T-cell (primary cell): ENCODE measurements at regions of chr3 and their contacts with region 1.

Region 1: DNA sequence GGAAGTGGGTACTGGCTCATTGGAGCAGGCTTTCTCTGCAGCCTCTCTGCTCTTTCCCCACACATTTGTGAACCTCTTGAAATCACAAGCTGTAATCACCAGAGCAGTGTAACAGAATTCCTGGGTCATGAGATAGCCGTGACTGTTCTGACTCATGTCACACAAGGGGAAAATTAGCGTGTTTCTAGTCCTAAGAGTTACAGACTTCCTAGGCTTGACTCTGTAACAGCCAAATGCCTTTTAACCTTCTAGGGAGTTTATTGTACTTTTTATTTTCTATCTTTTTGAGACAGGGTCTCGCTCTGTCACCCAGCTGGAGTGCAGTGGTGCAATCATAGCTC is 54.7 kb upstream of the TRAK1 start:
- DNase-seq: no peak
- ATAC-seq: no peak
- H3K4me3 ChIP-seq: no peak overlapping the region
- H3K4me3 Mint-ChIP-seq: no peak overlapping the region
- H3K27ac ChIP-seq: no peak overlapping the region
- H3K27ac Mint-ChIP-seq: no peak overlapping the region
- H3K4me1 ChIP-seq: no peaks in the 10 kb centered on the region
- H3K4me1 Mint-ChIP-seq: peaks cover 14 to 32% (median 15%) of the 10 kb centered on the region in 3 donors
- H3K27me3 ChIP-seq: no peaks in the 10 kb centered on the region
- H3K27me3 Mint-ChIP-seq: no peaks in the 10 kb centered on the region

Region 2: GRCh38 chr3:41169023-41169422 is 867.4 kb before region 1 on chr3:
- CTCF ChIA-PET with region 1: no interaction called
- POLR2A ChIA-PET with region 1: interaction called in 1 of 2 experiments, 11 read pairs
- DNase-seq: no peak
- ATAC-seq: no peak
- H3K4me3 ChIP-seq: no peak overlapping the region
- H3K4me3 Mint-ChIP-seq: no peak overlapping the region
- H3K27ac ChIP-seq: no peak overlapping the region
- H3K27ac Mint-ChIP-seq: no peak overlapping the region
- H3K4me1 ChIP-seq: peaks cover 3 to 7% of the 10 kb centered on the region in 2 experiments
- H3K4me1 Mint-ChIP-seq: peaks cover 11 to 13% (median 12%) of the 10 kb centered on the region in 3 donors
- H3K27me3 ChIP-seq: peaks cover 0 to 13% of the 10 kb centered on the region in 2 experiments
- H3K27me3 Mint-ChIP-seq: peaks cover 11 to 20% of the 10 kb centered on the region in 2 donors

Region 3: GRCh38 chr3:43102773-43103480 is 1066.5 kb after region 1 on chr3:
- CTCF ChIA-PET with region 1: no interaction called
- POLR2A ChIA-PET with region 1: no interaction called
- DNase-seq: no peak
- ATAC-seq: no peak
- H3K4me3 ChIP-seq: no peak overlapping the region
- H3K4me3 Mint-ChIP-seq: peak overlapping the region in 1 of 3 donors; percentile 47
- H3K27ac ChIP-seq: no peak overlapping the region
- H3K27ac Mint-ChIP-seq: no peak overlapping the region
- H3K4me1 ChIP-seq: peaks cover 6 to 20% of the 10 kb centered on the region in 2 experiments
- H3K4me1 Mint-ChIP-seq: peaks cover 23 to 39% (median 26%) of the 10 kb centered on the region in 3 donors
- H3K27me3 ChIP-seq: peaks cover 0 to 4% of the 10 kb centered on the region in 2 experiments
- H3K27me3 Mint-ChIP-seq: peaks cover 0 to under 1% of the 10 kb centered on the region in 2 donors